Sigmoid colon (tissue), 7 donors: ENCODE measurements at regions of chr1 and their contacts with region 1.

Region 1: GRCh38 chr1:93629099-93630059 is 52.3 kb downstream of the BCAR3 start:
- DNase-seq: no peak
- H3K4me3 ChIP-seq: no peak overlapping the region
- H3K27ac ChIP-seq: no peak overlapping the region
- H3K4me1 ChIP-seq: peaks cover 0 to 9% (median 0%) of the 10 kb centered on the region in 4 donors
- H3K27me3 ChIP-seq: no peaks in the 10 kb centered on the region
- CTCF ChIP-seq: peak; percentile 82 to 89 (median 82)
- EP300 ChIP-seq: no peak
- POLR2A ChIP-seq: no peak

Region 2: DNA sequence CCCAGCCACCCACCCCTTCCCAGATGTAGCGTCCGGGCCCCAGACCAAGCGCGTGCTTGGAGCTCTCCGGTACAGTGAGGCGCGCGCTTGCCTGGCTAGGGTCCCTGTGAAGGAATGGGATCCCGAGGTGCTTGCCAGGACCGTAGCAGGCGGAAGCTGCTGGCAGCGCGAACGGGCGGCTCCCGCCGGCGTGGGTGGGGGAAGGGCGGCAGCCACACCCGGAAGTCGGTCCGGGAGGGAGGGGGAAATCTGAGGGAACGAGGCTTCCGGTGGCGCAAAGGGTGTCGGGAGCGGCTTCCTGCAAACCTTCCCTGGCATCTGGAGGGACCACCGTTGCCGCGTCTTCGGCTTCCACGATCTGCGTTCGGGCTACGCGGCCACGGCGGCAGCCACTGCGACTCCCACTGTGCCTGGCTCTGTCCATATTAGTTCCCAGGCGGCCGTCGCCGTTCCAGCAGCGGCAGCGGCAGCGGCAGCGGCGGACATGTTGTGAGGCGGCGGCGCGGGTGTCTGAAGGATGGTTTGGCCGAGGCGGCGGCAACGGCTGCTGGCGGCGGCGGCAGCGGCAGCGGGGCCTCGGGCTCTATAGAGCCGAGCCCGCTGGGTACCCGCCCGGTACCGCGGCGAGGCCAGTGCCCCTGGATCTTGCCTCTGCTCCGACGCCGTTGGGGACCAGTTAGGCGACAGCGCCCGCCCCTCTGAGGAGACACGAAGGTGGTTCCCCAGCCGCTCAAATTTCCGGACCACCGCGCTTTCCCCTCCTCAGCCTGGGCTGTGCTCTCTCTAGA is 283.6 kb before region 1 on chr1 and contains the start of gene DR1:
- intact Hi-C with region 1: loop called (anchors 10 kb)
- DNase-seq: peak; percentile 97
- H3K4me3 ChIP-seq: peak within 1 kb of the TSS; percentile 91 to 99 (median 96)
- H3K27ac ChIP-seq: peak within 1 kb of the TSS; percentile 94 to 98 (median 96)
- H3K4me1 ChIP-seq: peaks cover 0 to 69% (median 32%) of the 10 kb centered on the region in 4 donors
- H3K27me3 ChIP-seq: no peaks in the 10 kb centered on the region
- CTCF ChIP-seq: no peak
- EP300 ChIP-seq: peak in 2 of 4 donors; percentile 57 to 72
- POLR2A ChIP-seq: peak; percentile 84 to 90
- total RNA-seq, gene DR1: 19.9 to 24.2 (median 20.3) TPM

Region 3: DNA sequence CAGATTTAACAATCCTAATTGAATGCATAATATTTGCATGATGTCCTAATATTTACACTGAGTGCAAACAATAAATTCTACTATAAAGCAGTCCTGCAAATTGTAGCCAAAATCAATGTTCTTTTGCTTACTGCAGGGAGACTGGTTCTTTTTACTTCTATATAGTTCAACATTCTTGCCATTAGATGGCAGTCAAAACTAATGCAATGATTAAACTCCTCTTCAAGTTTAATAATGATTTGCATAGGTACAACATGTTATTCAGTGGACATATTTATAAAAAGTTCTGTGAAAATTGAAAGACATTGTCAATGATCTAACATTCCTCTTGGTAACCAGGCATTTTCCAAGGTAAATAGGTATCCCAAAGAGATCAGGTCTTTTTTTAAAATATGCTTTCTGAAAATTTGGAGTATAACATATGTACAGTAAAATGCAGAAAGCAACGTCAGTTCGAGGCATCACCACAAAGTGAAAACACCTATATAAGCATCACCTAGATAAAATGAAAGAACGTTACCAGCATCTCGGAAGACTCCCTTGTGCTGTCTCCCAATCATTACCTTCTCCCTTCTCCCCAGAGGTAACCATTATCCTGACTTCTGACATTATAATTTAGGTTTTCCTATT is 191.3 kb before region 1 on chr1:
- intact Hi-C with region 1: loop called (anchors 2 kb)
- DNase-seq: no peak
- H3K4me3 ChIP-seq: no peak overlapping the region
- H3K27ac ChIP-seq: no peak overlapping the region
- H3K4me1 ChIP-seq: no peaks in the 10 kb centered on the region
- H3K27me3 ChIP-seq: no peaks in the 10 kb centered on the region
- CTCF ChIP-seq: peak; percentile 20 to 70 (median 50)
- EP300 ChIP-seq: no peak
- POLR2A ChIP-seq: no peak

Region 4: GRCh38 chr1:93680757-93681550 is 51.6 kb after region 1 on chr1:
- intact Hi-C with region 1: loop called (anchors 2 kb)
- DNase-seq: peak; percentile 91
- H3K4me3 ChIP-seq: peak overlapping the region; percentile 81 to 90 (median 88)
- H3K27ac ChIP-seq: peak overlapping the region; percentile 80 to 93 (median 90)
- H3K4me1 ChIP-seq: peaks cover 0 to 30% (median 11%) of the 10 kb centered on the region in 4 donors
- H3K27me3 ChIP-seq: no peaks in the 10 kb centered on the region
- CTCF ChIP-seq: peak; percentile 25 to 78 (median 68)
- EP300 ChIP-seq: no peak
- POLR2A ChIP-seq: peak in 1 of 2 donors; percentile 19

Region 5: DNA sequence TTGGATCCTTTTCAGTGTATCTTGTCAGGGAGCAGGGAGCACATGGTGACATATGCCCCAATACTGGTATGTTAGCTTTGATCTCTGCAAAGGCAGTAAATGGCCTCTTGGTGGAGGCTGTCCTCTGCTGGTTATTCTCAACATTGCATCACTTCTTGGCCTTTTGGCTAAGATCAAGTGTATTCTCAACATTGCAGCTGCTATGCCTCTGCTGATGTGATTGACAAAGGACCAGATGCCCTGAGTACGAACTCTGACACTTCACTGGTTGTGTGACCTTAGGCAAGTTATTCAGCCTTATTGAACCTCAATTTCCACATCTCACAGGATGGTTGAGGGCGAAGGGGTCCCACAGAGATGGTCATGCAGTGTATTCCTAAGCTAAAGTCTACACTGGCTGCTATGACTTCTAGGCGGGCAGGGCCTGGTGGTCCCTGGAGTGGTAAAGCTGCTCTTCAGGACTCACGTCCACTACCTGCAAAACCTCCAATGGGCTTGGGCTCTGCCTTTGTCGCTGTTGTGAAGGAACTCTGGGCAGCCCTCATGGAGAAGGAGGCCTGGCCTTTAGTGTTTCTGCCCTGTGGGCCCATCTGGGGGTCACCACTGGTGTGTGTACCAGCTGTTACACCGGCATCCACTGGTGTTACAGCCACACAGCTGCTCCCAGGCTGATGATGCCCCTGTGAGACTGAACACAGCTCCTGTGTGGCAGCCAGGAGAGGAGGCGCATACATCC is 184.8 kb after region 1 on chr1:
- intact Hi-C with region 1: loop called (anchors 1 kb)
- DNase-seq: peak; percentile 74
- H3K4me3 ChIP-seq: no peak overlapping the region
- H3K27ac ChIP-seq: no peak overlapping the region
- H3K4me1 ChIP-seq: peaks cover 0 to 20% (median 16%) of the 10 kb centered on the region in 4 donors
- H3K27me3 ChIP-seq: no peaks in the 10 kb centered on the region
- CTCF ChIP-seq: peak; percentile 92 to 97 (median 96)
- EP300 ChIP-seq: no peak
- POLR2A ChIP-seq: no peak